Ascending aorta (tissue), 2 donors: ENCODE measurements at regions of chr1 and their contacts with region 1.

Region 1: DNA sequence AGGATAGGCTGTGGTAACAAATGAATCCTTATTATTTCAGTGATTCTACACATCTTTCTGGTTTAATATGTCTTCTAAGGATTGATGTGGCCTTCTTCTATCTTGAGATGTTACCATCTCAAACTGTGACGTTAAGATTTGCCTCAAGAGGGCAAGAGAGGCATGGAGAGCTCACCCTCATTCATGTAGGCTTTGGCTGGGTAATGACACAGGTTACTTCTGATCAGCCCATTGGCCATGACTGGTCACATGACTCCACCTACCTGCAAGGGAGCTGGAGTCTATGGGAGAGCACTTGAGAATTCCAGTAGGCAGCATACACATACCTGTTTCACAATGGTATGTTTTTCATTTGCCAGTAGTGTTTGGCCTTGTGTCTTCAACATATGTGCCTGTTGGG is 30.0 kb downstream of the CACHD1 start:
- DNase-seq: no peak
- H3K4me3 ChIP-seq: no peak overlapping the region
- H3K27ac ChIP-seq: no peak overlapping the region
- H3K4me1 ChIP-seq: peaks cover 0 to 7% of the 10 kb centered on the region in 2 donors
- H3K27me3 ChIP-seq: no peaks in the 10 kb centered on the region
- CTCF ChIP-seq: no peak

Region 2: DNA sequence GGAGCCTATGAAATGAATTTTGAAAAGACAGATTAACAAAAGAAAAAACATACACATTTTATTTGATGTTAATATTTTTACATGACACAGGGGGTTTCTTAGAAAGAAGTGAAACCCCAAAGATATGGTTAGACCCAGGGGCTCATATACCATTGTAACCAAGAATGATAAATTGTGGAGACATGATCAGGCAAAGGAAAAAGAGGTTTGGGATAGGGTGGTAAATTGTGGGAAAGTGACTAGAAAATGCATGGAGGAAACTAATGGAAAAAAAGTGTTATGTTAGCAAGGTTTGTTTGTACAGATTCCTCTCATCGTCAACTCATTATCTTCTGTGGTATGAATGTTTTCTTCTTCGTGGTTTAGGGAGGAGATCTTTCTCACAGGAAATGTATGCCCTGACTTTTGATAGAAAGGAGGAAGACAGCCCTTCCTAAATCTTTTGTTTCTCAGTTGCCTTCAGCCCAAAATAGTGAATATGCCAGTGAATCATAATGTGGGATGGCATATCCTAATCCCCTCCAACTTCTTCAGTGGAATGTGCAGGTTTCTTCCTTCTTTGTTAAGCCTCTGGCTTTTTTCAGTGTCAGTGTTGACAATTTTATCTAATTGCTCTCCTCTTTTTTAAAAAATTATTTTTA is 436.9 kb before region 1 on chr1:
- intact Hi-C with region 1: no loop called
- DNase-seq: no peak
- H3K4me3 ChIP-seq: no peak overlapping the region
- H3K27ac ChIP-seq: no peak overlapping the region
- H3K4me1 ChIP-seq: peaks cover 0 to 17% of the 10 kb centered on the region in 2 donors
- H3K27me3 ChIP-seq: no peaks in the 10 kb centered on the region
- CTCF ChIP-seq: no peak

Region 3: GRCh38 chr1:64268653-64269557 is 231.1 kb before region 1 on chr1:
- intact Hi-C with region 1: no loop called
- DNase-seq: peak in 1 of 2 donors; percentile 72
- H3K4me3 ChIP-seq: no peak overlapping the region
- H3K27ac ChIP-seq: no peak overlapping the region
- H3K4me1 ChIP-seq: no peaks in the 10 kb centered on the region
- H3K27me3 ChIP-seq: no peaks in the 10 kb centered on the region
- CTCF ChIP-seq: peak; percentile 62 to 81 (median 79)

Region 4: DNA sequence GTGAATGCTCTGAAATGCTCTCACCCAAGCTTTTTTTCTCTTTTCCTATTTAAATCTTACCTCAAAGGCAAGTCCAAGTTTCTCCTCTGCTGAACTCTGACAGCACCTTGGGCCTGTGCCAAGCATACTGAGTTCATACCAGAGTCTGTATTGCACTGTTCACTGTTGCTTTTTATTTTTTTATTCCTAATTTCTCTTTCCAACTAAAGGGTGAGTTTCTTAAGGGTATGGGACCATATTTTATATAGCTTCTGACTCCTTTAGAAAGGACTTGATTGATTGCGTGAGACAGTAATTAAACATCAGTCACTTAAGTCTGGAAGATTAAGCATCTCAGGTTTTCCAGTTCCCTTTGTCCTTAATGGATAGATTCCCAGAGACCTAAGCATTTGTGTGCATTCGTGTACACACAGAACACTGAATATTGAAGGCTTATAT is 39.8 kb after region 1 on chr1:
- intact Hi-C with region 1: loop called (anchors 5 kb)
- DNase-seq: peak in 1 of 2 donors; percentile 82
- H3K4me3 ChIP-seq: peak overlapping the region in 1 of 2 donors; percentile 51
- H3K27ac ChIP-seq: peak overlapping the region in 1 of 2 donors; percentile 46
- H3K4me1 ChIP-seq: peaks cover 0 to 6% of the 10 kb centered on the region in 2 donors
- H3K27me3 ChIP-seq: no peaks in the 10 kb centered on the region
- CTCF ChIP-seq: no peak